B cell (primary cell): ENCODE measurements at regions of chr9 and their contacts with region 1.

Region 1: GRCh38 chr9:104747558-104748358 is at the start of gene NIPSNAP3A:
- DNase-seq: peak; percentile 95
- ATAC-seq: peak; percentile 85
- H3K4me3 ChIP-seq: peak within 1 kb of the TSS; percentile 76 to 91 (median 84)
- H3K4me3 Mint-ChIP-seq: peak within 1 kb of the TSS; percentile 95
- H3K27ac ChIP-seq: peak within 1 kb of the TSS; percentile 88 to 90
- H3K27ac Mint-ChIP-seq: peak within 1 kb of the TSS; percentile 96
- H3K4me1 ChIP-seq: peaks cover 11 to 15% of the 10 kb centered on the region in 2 donors
- H3K4me1 Mint-ChIP-seq: peaks cover 30% of the 10 kb centered on the region
- H3K27me3 ChIP-seq: no peaks in the 10 kb centered on the region
- H3K27me3 Mint-ChIP-seq: no peaks in the 10 kb centered on the region
- CTCF ChIP-seq: no peak
- total RNA-seq, gene NIPSNAP3A: 20.8 and 23.6 TPM in 2 replicates

Region 2: GRCh38 chr9:103789686-103790085 is 958.1 kb before region 1 on chr9:
- CTCF ChIA-PET with region 1: no interaction called
- POLR2A ChIA-PET with region 1: no interaction called
- intact Hi-C with region 1: loop called (anchors 10 kb)
- DNase-seq: no peak
- ATAC-seq: no peak
- H3K4me3 ChIP-seq: no peak overlapping the region
- H3K4me3 Mint-ChIP-seq: no peak overlapping the region
- H3K27ac ChIP-seq: no peak overlapping the region
- H3K27ac Mint-ChIP-seq: no peak overlapping the region
- H3K4me1 ChIP-seq: no peaks in the 10 kb centered on the region
- H3K4me1 Mint-ChIP-seq: no peaks in the 10 kb centered on the region
- H3K27me3 ChIP-seq: no peaks in the 10 kb centered on the region
- H3K27me3 Mint-ChIP-seq: no peaks in the 10 kb centered on the region
- CTCF ChIP-seq: peak; percentile 6

Region 3: GRCh38 chr9:104177003-104177611 is 570.7 kb before region 1 on chr9:
- CTCF ChIA-PET with region 1: interaction called, 10 read pairs
- POLR2A ChIA-PET with region 1: no interaction called
- intact Hi-C with region 1: loop called (anchors 2 kb)
- DNase-seq: peak; percentile 9
- ATAC-seq: no peak
- H3K4me3 ChIP-seq: no peak overlapping the region
- H3K4me3 Mint-ChIP-seq: no peak overlapping the region
- H3K27ac ChIP-seq: no peak overlapping the region
- H3K27ac Mint-ChIP-seq: no peak overlapping the region
- H3K4me1 ChIP-seq: no peaks in the 10 kb centered on the region
- H3K4me1 Mint-ChIP-seq: no peaks in the 10 kb centered on the region
- H3K27me3 ChIP-seq: no peaks in the 10 kb centered on the region
- H3K27me3 Mint-ChIP-seq: peaks cover 8% of the 10 kb centered on the region
- CTCF ChIP-seq: peak; percentile 20

Region 4: GRCh38 chr9:104456831-104457230 is 290.9 kb before region 1 on chr9:
- CTCF ChIA-PET with region 1: no interaction called
- POLR2A ChIA-PET with region 1: no interaction called
- intact Hi-C with region 1: no loop called
- DNase-seq: no peak
- ATAC-seq: no peak
- H3K4me3 ChIP-seq: no peak overlapping the region
- H3K4me3 Mint-ChIP-seq: no peak overlapping the region
- H3K27ac ChIP-seq: no peak overlapping the region
- H3K27ac Mint-ChIP-seq: no peak overlapping the region
- H3K4me1 ChIP-seq: no peaks in the 10 kb centered on the region
- H3K4me1 Mint-ChIP-seq: no peaks in the 10 kb centered on the region
- H3K27me3 ChIP-seq: no peaks in the 10 kb centered on the region
- H3K27me3 Mint-ChIP-seq: no peaks in the 10 kb centered on the region
- CTCF ChIP-seq: no peak

Region 5: GRCh38 chr9:104711604-104712003 is 36.2 kb before region 1 on chr9:
- CTCF ChIA-PET with region 1: no interaction called
- POLR2A ChIA-PET with region 1: no interaction called
- intact Hi-C with region 1: no loop called
- DNase-seq: no peak
- ATAC-seq: no peak
- H3K4me3 ChIP-seq: no peak overlapping the region
- H3K4me3 Mint-ChIP-seq: no peak overlapping the region
- H3K27ac ChIP-seq: no peak overlapping the region
- H3K27ac Mint-ChIP-seq: no peak overlapping the region
- H3K4me1 ChIP-seq: no peaks in the 10 kb centered on the region
- H3K4me1 Mint-ChIP-seq: peaks cover 4% of the 10 kb centered on the region
- H3K27me3 ChIP-seq: no peaks in the 10 kb centered on the region
- H3K27me3 Mint-ChIP-seq: no peaks in the 10 kb centered on the region
- CTCF ChIP-seq: no peak

Region 6: DNA sequence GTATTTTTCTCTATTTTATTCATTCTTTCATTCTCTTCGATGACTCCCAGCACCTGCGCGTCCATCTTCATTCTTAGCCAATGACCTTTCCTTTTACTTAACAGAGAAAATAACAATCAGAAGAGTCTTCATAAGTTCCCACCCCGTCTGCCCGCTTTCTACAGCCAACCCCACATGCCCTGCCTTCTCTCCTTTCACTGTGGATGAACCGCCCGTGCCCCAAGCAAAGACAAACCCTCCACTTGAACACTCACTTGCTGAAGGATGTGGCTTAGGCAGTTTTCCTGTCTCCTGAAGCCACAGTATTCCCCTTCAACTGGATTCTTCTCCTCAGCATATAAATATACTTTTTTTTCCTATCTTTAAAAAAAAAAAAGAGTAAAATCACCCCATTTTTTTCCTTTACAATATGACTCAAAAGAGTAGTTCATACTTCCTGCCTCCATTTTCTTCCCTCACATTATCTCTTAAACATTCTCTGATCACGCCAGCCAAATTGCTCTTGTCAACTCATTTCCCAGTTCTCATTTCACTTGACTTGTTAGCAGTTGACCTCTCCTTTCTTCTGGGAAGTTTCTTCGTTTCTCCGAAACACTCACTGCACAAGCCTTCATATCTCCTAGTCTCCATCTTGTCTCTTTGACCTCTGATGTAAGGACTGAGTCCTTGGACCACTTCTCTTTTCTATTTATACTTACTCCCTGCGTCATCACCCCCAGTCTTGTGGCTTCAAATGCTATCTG is 27.2 kb after region 1 on chr9:
- CTCF ChIA-PET with region 1: interaction called, 5 read pairs
- POLR2A ChIA-PET with region 1: interaction called, 6 read pairs
- intact Hi-C with region 1: loop called (anchors 1 kb)
- DNase-seq: peak; percentile 86
- ATAC-seq: peak; percentile 90
- H3K4me3 ChIP-seq: peak overlapping the region in 4 of 5 experiments; percentile 3 to 48 (median 36)
- H3K4me3 Mint-ChIP-seq: no peak overlapping the region
- H3K27ac ChIP-seq: peak overlapping the region; percentile 77 to 81
- H3K27ac Mint-ChIP-seq: no peak overlapping the region
- H3K4me1 ChIP-seq: peaks cover 38 to 43% of the 10 kb centered on the region in 2 donors
- H3K4me1 Mint-ChIP-seq: peaks cover 34% of the 10 kb centered on the region
- H3K27me3 ChIP-seq: no peaks in the 10 kb centered on the region
- H3K27me3 Mint-ChIP-seq: no peaks in the 10 kb centered on the region
- CTCF ChIP-seq: no peak

Region 7: GRCh38 chr9:104795082-104795481 is 47.3 kb after region 1 on chr9:
- CTCF ChIA-PET with region 1: no interaction called
- POLR2A ChIA-PET with region 1: no interaction called
- intact Hi-C with region 1: no loop called
- DNase-seq: no peak
- ATAC-seq: no peak
- H3K4me3 ChIP-seq: no peak overlapping the region
- H3K4me3 Mint-ChIP-seq: no peak overlapping the region
- H3K27ac ChIP-seq: no peak overlapping the region
- H3K27ac Mint-ChIP-seq: no peak overlapping the region
- H3K4me1 ChIP-seq: no peaks in the 10 kb centered on the region
- H3K4me1 Mint-ChIP-seq: no peaks in the 10 kb centered on the region
- H3K27me3 ChIP-seq: no peaks in the 10 kb centered on the region
- H3K27me3 Mint-ChIP-seq: no peaks in the 10 kb centered on the region
- CTCF ChIP-seq: no peak

Region 8: DNA sequence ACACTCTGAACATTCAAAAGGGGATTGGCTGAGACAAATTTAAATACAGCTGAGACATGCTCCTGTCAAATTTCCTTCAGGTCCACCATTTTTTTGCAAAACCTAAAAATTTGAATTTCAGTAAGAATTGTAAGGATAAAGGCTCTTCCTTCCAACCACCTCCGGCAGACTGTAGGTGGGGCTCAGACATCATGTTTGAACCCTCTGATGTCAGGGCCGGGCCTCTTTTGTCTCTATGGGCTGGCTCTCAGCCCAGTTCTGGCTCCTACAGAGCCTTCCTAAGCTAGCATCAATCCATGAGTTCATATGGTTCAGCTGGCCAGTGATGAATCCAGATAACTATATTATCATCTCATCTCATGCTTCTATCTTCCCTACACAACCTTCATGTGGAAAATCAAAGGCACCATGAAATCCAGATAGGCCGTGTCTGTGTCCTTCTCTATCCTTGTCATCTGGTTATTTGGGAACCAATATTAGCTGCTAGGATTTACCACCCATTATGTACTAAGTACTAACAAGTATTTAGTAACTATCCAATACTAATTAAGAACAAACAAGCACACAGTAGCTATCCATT is 60.4 kb after region 1 on chr9:
- CTCF ChIA-PET with region 1: no interaction called
- POLR2A ChIA-PET with region 1: no interaction called
- intact Hi-C with region 1: no loop called
- DNase-seq: no peak
- ATAC-seq: no peak
- H3K4me3 ChIP-seq: no peak overlapping the region
- H3K4me3 Mint-ChIP-seq: no peak overlapping the region
- H3K27ac ChIP-seq: no peak overlapping the region
- H3K27ac Mint-ChIP-seq: no peak overlapping the region
- H3K4me1 ChIP-seq: no peaks in the 10 kb centered on the region
- H3K4me1 Mint-ChIP-seq: no peaks in the 10 kb centered on the region
- H3K27me3 ChIP-seq: no peaks in the 10 kb centered on the region
- H3K27me3 Mint-ChIP-seq: no peaks in the 10 kb centered on the region
- CTCF ChIP-seq: no peak

Region 9: DNA sequence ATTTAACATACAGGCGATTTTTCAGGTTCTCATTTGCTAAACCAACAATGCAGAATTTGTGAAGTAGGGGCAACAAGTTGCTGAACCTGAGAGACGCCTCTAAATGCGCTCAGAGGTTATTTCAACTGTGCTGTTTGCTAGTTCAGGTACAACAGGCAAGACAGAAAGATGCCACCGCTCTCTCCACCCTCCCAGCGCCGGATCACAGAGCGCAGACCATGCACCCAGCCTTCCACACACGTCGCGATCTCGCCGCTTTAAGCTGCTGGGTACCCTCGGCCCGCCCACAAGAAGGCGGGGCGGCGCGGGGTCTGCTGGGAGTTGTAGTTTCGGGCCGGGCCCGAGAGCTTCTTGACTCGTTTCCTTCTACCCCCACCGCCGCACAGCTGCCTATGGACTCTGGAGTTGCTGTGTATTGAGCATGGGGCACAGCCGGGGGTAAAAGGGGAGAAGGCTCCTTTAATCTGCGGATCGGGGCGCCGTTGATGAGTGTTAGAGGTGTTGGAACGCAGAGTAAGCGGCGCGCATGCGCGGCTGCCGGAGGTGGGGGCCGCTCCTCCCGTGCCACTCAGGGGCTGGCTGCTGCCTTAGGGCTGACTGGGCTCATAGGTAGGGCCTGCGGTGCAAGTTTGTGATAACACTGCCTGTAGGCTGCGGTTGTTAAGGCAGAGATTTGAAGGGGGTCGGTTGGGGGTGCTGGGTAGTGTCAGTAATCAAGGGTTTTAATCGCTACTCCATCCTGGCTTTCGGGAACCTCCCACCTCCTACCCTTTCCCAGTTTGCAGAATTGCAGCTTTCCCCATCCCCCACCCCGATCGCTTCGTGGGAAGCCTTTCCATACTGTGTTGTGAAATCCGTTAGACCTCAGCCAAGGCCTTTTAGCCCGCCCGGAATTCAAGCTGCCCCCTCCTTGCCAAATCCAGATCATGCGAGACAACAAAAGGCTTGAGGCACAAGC is 220.5 kb after region 1 on chr9:
- CTCF ChIA-PET with region 1: no interaction called
- POLR2A ChIA-PET with region 1: no interaction called
- intact Hi-C with region 1: loop called (anchors 1 kb)
- DNase-seq: peak; percentile 92
- ATAC-seq: peak; percentile 99
- H3K4me3 ChIP-seq: peak overlapping the region; percentile 68 to 86 (median 78)
- H3K4me3 Mint-ChIP-seq: peak overlapping the region; percentile 91
- H3K27ac ChIP-seq: no peak overlapping the region
- H3K27ac Mint-ChIP-seq: peak overlapping the region; percentile 71
- H3K4me1 ChIP-seq: peaks cover 4 to 14% of the 10 kb centered on the region in 2 donors
- H3K4me1 Mint-ChIP-seq: peaks cover 10% of the 10 kb centered on the region
- H3K27me3 ChIP-seq: peaks cover 0 to 4% (median 2%) of the 10 kb centered on the region in 4 experiments
- H3K27me3 Mint-ChIP-seq: peaks cover 21% of the 10 kb centered on the region
- CTCF ChIP-seq: no peak

Region 10: GRCh38 chr9:105447814-105448812 is 700.4 kb after region 1 on chr9 and contains the start of gene FSD1L:
- CTCF ChIA-PET with region 1: no interaction called
- POLR2A ChIA-PET with region 1: no interaction called
- intact Hi-C with region 1: loop called (anchors 10 kb)
- DNase-seq: peak; percentile 90
- ATAC-seq: peak; percentile 91
- H3K4me3 ChIP-seq: peak within 1 kb of the TSS in 4 of 5 experiments; percentile 69 to 83 (median 74)
- H3K4me3 Mint-ChIP-seq: peak within 1 kb of the TSS; percentile 90
- H3K27ac ChIP-seq: peak within 1 kb of the TSS; percentile 21 to 24
- H3K27ac Mint-ChIP-seq: peak within 1 kb of the TSS; percentile 89
- H3K4me1 ChIP-seq: peaks cover 9 to 11% of the 10 kb centered on the region in 2 donors
- H3K4me1 Mint-ChIP-seq: peaks cover 17% of the 10 kb centered on the region
- H3K27me3 ChIP-seq: no peaks in the 10 kb centered on the region
- H3K27me3 Mint-ChIP-seq: no peaks in the 10 kb centered on the region
- CTCF ChIP-seq: no peak
- total RNA-seq, gene FSD1L: 9.8 and 15.2 TPM in 2 replicates

Region 11: GRCh38 chr9:105694190-105694847 is 946.6 kb after region 1 on chr9 and contains the start of gene TMEM38B:
- CTCF ChIA-PET with region 1: no interaction called
- POLR2A ChIA-PET with region 1: no interaction called
- intact Hi-C with region 1: loop called (anchors 5 kb)
- DNase-seq: peak; percentile 90
- ATAC-seq: peak; percentile 83
- H3K4me3 ChIP-seq: peak within 1 kb of the TSS; percentile 75 to 93 (median 82)
- H3K4me3 Mint-ChIP-seq: peak within 1 kb of the TSS; percentile 95
- H3K27ac ChIP-seq: peak within 1 kb of the TSS; percentile 58 to 77
- H3K27ac Mint-ChIP-seq: peak within 1 kb of the TSS; percentile 92
- H3K4me1 ChIP-seq: peaks cover 17 to 18% of the 10 kb centered on the region in 2 donors
- H3K4me1 Mint-ChIP-seq: peaks cover 19% of the 10 kb centered on the region
- H3K27me3 ChIP-seq: peaks cover 0 to 14% (median 11%) of the 10 kb centered on the region in 4 experiments
- H3K27me3 Mint-ChIP-seq: peaks cover 26% of the 10 kb centered on the region
- CTCF ChIP-seq: no peak
- total RNA-seq, gene TMEM38B: 29.6 and 35.2 TPM in 2 replicates